Lower lobe of right lung (tissue), 2 donors: ENCODE measurements at regions of chr4 and their contacts with region 1.

Region 1: DNA sequence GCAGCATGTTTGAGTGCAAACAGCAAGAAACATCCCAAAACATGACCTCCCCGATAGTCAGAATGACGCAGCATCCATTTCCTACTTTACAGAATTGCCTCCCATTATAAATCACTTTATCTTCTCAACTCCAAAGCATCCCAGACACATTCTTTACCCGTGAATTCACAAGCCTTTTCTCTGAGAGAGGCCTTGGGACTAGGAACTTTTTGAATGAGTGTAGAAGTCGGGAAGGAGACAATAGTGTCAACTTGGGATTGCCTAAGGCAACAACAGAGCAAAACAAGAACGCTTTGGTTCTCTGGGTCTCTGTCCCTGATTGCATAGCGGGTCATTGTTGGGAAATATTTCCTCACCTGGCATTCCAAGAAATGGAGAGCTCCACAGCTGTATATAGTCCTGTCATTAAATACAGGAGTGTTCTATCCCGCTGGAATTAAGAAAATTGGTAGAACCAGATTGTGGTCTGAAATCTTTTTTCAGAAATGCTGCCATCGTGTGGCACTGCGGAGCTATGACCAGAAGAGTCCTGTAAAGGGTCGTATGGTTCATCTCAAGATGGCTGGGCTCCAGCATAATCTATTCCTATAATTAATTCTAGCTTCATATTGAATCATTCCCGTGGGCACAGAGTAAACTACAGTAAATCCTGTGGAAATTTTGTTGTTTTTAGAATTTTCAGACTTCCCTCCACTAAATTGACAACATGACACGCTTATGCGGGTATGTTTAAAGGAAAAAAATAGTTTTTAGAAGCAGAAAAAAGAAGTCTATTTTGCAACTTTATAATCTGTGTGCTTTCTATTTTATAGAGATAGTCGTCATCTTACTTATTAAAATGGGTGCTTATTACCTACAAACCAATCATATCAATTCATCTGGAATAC is 2.0 kb upstream of the SPP1 start:
- DNase-seq: peak; percentile 56
- ATAC-seq: peak; percentile 77 to 79
- H3K4me3 ChIP-seq: peak overlapping the region; percentile 3
- H3K27ac ChIP-seq: no peak overlapping the region
- H3K4me1 ChIP-seq: peaks cover 7% of the 10 kb centered on the region
- H3K27me3 ChIP-seq: peaks cover 13% of the 10 kb centered on the region
- CTCF ChIP-seq: peak; percentile 84

Region 2: DNA sequence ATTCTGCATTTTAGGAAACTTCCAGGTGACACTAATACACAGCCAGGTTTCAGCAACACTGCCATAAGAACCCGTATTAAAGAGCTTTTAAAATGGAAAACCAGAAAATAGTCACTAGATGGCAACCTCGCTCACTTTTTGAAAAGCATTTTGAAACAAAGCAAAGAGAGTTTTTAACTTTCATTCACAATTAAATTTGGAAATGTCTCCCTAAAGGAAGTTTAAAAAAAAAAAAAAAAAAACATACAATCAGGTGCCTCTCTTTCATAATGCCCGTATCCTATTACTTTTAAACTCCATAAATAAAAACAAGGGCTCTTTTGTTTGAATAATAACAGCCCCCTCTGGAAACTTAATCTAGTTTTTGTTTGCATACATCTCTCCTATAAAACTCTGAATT is 120.4 kb before region 1 on chr4:
- intact Hi-C with region 1: loop called (anchors 10 kb)
- DNase-seq: no peak
- ATAC-seq: no peak
- H3K4me3 ChIP-seq: no peak overlapping the region
- H3K27ac ChIP-seq: no peak overlapping the region
- H3K4me1 ChIP-seq: peaks cover 17% of the 10 kb centered on the region
- H3K27me3 ChIP-seq: no peaks in the 10 kb centered on the region
- CTCF ChIP-seq: peak; percentile 47